ENCODE measurements at regions of chr2 and their contacts with region 1.

Region 1: DNA sequence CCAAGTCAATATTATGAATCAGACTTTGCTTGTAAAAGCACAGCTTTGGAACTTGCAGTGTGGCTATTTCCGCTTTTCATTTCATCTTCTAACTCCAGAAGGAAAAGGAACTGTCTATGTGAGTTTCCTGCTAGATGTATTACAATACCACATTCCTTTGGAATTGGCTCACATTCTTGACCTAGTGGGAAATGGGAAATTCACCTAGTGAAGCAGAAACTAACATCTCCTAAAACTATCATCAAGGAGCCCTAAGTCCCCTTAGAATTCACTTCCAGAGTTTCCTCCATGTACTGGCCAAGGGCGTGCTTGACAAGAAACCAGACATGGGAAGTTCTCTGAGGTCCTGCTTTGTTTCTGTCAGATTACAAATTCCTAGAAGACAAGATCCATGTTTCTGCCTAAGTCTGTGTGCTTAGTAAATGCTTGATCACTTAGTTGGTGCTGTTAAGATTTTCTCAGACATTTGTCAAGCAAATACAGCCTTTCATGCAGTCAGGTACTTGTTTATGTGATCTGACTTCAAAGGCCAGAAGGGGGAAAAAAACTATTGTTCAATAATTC is 275.7 kb upstream of the FN1 start:
- DNase-seq: peak in 1 of 2 experiments; percentile 62
- H3K4me3 ChIP-seq: no peak overlapping the region
- H3K4me3 Mint-ChIP-seq: no peak overlapping the region
- H3K27ac Mint-ChIP-seq: peak overlapping the region; percentile 74
- H3K4me1 ChIP-seq: peaks cover 75% of the 10 kb centered on the region
- H3K4me1 Mint-ChIP-seq: peaks cover 53% of the 10 kb centered on the region
- H3K27me3 ChIP-seq: no peaks in the 10 kb centered on the region
- H3K27me3 Mint-ChIP-seq: no peaks in the 10 kb centered on the region
- CTCF ChIP-seq: no peak

Region 2: DNA sequence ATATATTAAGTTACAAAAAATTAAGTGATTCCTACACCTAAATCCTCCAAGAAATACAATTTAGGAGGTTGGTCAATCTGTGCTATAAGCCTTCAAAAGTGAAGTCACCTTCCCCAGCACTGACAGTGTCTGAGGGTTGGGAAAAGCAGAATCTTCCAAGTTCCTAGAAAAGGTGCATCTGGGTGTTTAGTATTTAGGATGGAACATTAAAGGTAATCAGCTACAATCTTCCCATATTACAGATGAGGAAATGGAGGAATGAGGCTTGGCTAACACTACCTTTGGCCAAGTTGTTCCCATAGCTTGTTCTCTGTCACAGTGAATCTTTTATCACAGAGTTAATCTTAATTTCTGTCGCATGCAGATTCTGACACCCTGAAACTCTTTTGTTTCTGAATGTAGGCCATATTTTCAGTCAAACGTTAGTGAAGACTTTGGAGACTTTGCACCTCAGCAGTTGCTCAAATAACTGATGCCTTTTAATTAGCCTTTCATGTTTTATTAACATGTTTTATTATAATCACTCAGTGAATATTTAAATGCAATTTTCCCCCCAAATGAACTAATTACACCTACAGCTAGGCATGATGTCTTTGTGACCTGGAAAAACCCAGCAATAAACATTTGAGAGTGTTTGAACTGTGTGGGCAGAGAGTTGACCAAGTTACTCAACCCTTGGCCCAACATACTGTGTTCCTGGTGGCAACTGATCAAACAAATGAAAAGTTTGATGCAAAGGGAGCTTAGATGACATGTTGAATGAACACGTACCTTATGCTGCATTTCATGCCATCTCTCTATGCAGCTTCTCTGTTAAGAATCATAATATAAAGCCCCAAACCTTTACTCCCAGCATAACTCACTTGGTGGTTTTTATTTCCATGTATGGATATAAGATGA is 293.2 kb before region 1 on chr2:
- CTCF ChIA-PET with region 1: no interaction called
- POLR2A ChIA-PET with region 1: no interaction called
- intact Hi-C with region 1: loop called (anchors 1 kb)
- DNase-seq: no peak
- H3K4me3 ChIP-seq: no peak overlapping the region
- H3K4me3 Mint-ChIP-seq: no peak overlapping the region
- H3K27ac Mint-ChIP-seq: peak overlapping the region; percentile 82
- H3K4me1 ChIP-seq: peaks cover 91% of the 10 kb centered on the region
- H3K4me1 Mint-ChIP-seq: peaks cover 49% of the 10 kb centered on the region
- H3K27me3 ChIP-seq: no peaks in the 10 kb centered on the region
- H3K27me3 Mint-ChIP-seq: no peaks in the 10 kb centered on the region
- CTCF ChIP-seq: no peak

Region 3: GRCh38 chr2:215505044-215505786 is 206.3 kb before region 1 on chr2:
- CTCF ChIA-PET with region 1: no interaction called
- POLR2A ChIA-PET with region 1: no interaction called
- intact Hi-C with region 1: loop called (anchors 1 kb)
- DNase-seq: peak; percentile 68 to 70
- H3K4me3 ChIP-seq: no peak overlapping the region
- H3K4me3 Mint-ChIP-seq: peak overlapping the region; percentile 54
- H3K27ac Mint-ChIP-seq: peak overlapping the region; percentile 46
- H3K4me1 ChIP-seq: peaks cover 42% of the 10 kb centered on the region
- H3K4me1 Mint-ChIP-seq: peaks cover 38% of the 10 kb centered on the region
- H3K27me3 ChIP-seq: no peaks in the 10 kb centered on the region
- H3K27me3 Mint-ChIP-seq: no peaks in the 10 kb centered on the region
- CTCF ChIP-seq: no peak

Region 4: GRCh38 chr2:215693193-215693998 is 18.2 kb before region 1 on chr2:
- CTCF ChIA-PET with region 1: interaction called, 7 read pairs
- POLR2A ChIA-PET with region 1: no interaction called
- intact Hi-C with region 1: loop called (anchors 2 kb)
- DNase-seq: no peak
- H3K4me3 ChIP-seq: no peak overlapping the region
- H3K4me3 Mint-ChIP-seq: peak overlapping the region; percentile 23
- H3K27ac Mint-ChIP-seq: peak overlapping the region; percentile 83
- H3K4me1 ChIP-seq: peaks cover 49% of the 10 kb centered on the region
- H3K4me1 Mint-ChIP-seq: peaks cover 60% of the 10 kb centered on the region
- H3K27me3 ChIP-seq: no peaks in the 10 kb centered on the region
- H3K27me3 Mint-ChIP-seq: no peaks in the 10 kb centered on the region
- CTCF ChIP-seq: no peak

Region 5: DNA sequence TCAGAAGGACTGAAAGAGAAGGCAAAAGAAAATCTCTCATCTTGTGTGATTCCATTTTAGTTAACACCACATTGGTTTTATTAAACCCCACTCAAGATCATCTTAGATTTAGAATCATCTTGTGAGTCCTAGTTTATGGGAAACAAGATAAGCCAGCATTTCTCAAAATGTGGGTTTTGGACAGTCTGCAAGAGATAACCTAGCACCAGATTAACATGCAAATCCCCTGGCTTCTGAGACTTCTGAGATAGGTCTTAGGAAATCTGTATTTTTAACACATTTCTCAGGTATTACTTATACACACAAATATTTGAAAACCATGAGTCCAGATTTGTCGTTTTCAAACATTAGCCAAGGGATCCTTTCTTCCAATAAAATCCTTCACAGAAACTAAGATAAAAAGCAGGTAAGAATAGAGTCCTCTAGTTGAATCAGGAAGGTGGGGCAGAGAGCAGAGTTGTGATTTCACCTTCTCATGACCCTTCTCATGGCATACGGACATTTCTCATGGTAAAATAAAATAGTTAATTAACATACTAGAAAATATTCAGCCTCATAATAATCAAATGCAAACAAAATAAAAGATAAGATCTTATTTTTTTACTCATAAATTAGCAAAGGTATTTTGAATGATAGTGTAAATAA is 11.6 kb after region 1 on chr2:
- CTCF ChIA-PET with region 1: no interaction called
- POLR2A ChIA-PET with region 1: no interaction called
- intact Hi-C with region 1: loop called (anchors 1 kb)
- DNase-seq: peak in 1 of 2 experiments; percentile 52
- H3K4me3 ChIP-seq: no peak overlapping the region
- H3K4me3 Mint-ChIP-seq: no peak overlapping the region
- H3K27ac Mint-ChIP-seq: peak overlapping the region; percentile 61
- H3K4me1 ChIP-seq: peaks cover 46% of the 10 kb centered on the region
- H3K4me1 Mint-ChIP-seq: peaks cover 34% of the 10 kb centered on the region
- H3K27me3 ChIP-seq: no peaks in the 10 kb centered on the region
- H3K27me3 Mint-ChIP-seq: no peaks in the 10 kb centered on the region
- CTCF ChIP-seq: no peak

Region 6: DNA sequence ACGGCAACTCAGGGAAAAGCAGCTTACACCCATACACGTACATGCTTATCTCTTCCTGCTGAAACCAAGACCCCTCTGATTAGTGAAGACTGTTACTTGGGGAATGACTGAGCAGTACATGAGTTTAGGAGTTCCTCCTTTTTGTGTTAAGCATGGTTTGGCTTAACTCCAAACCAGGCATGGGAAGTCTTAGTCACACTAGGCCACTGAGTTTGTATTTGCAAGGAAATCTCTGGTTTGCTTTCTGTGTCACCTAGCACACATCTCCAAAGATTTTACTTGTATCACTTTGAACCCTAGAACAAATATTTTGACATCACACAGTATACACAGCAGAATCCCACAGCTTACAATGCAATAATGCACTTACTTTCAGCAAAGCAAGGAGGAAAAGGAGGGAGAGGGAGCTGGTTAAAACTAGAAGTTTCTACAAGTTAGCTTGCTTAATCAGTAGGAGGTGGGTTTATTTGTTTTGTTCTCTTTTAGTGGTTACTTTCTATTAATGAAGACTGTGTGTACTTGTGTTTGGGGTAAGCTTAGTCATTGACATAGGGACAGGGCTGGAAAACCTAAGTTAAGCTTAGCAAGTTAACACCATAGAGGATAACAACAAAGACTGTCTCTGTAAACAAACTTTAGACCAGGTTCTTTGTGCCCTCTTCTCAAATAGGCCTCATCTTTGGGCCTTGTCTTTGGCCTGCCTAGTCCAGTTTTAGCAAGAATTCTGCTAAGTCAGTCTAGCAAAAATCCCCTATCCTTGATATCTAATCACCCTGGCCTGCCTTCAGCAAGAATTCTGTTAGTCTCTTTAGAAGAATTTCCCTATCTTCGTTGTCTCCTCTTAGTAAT is 82.4 kb after region 1 on chr2:
- CTCF ChIA-PET with region 1: interaction called, 4 read pairs
- POLR2A ChIA-PET with region 1: no interaction called
- intact Hi-C with region 1: loop called (anchors 1 kb)
- DNase-seq: peak in 1 of 2 experiments; percentile 62
- H3K4me3 ChIP-seq: no peak overlapping the region
- H3K4me3 Mint-ChIP-seq: no peak overlapping the region
- H3K27ac Mint-ChIP-seq: peak overlapping the region; percentile 81
- H3K4me1 ChIP-seq: peaks cover 41% of the 10 kb centered on the region
- H3K4me1 Mint-ChIP-seq: peaks cover 48% of the 10 kb centered on the region
- H3K27me3 ChIP-seq: no peaks in the 10 kb centered on the region
- H3K27me3 Mint-ChIP-seq: no peaks in the 10 kb centered on the region
- CTCF ChIP-seq: no peak

Region 7: DNA sequence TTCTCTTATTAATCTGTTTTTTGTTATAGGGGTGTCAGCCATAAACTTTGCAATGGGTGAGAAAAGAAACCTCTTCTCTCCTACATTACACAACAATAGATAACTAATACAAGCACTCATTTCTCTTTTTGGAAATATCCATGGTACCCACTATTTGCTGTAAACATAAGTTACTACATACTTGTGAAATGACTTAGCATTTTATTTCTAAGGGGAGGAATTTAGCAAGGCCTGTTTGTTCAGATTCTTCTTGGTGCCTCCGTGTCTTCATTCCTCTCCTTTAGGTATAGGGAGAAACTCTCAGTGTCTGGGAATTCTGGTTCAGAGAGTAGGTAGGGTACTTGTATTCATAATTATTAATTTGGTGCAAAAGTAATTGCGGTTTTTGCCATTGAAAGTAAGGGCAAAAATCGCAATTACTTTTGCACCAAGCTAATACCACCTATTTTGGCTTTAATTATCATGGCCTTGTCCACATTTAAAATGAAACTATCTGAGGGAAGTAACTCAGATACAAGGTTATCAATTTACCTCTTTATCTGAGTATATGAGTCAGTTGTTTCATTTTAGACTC is 167.0 kb after region 1 on chr2:
- CTCF ChIA-PET with region 1: no interaction called
- POLR2A ChIA-PET with region 1: no interaction called
- intact Hi-C with region 1: loop called (anchors 1 kb)
- DNase-seq: peak in 1 of 2 experiments; percentile 39
- H3K4me3 ChIP-seq: no peak overlapping the region
- H3K4me3 Mint-ChIP-seq: no peak overlapping the region
- H3K27ac Mint-ChIP-seq: peak overlapping the region; percentile 74
- H3K4me1 ChIP-seq: peaks cover 40% of the 10 kb centered on the region
- H3K4me1 Mint-ChIP-seq: peaks cover 28% of the 10 kb centered on the region
- H3K27me3 ChIP-seq: no peaks in the 10 kb centered on the region
- H3K27me3 Mint-ChIP-seq: no peaks in the 10 kb centered on the region
- CTCF ChIP-seq: no peak

Measured in Caco-2 (cell line).